ENCODE measurements at regions of chr6 and their contacts with region 1.

Region 1: DNA sequence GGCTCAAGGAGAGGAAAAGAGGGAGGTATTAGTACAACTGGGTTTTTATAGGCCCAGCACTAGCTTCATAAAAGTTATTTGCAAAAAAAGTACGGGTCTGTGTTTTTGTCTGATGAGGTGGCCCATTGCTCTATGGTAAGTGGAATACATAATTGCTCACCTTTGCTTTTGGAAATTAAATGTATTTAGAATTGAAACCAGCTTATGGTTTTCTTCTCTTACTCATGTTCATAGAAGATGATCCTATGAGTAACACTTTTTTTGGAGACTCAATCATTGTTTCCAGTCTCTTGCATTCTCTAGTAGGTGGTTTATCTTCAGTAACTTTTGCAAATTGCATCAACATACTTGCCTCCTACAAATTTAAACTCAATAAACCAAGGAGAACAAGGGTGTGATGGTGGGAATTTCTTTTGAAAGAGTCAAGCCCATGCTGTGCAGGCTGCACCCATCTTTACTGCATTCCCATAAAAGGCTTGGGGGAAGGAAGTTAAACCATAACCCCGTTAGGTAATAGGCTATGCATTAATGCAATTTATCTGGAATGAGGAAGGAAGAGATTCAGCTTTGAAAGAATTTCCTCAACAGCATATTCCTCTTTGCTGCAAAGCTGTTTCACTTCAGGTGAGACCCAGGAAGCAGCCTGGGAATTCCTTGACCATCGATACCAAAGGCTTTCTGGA is 48.5 kb upstream of the EDN1 start:
- DNase-seq: no peak
- H3K4me3 Mint-ChIP-seq: no peak overlapping the region
- H3K27ac Mint-ChIP-seq: peak overlapping the region; percentile 31
- H3K4me1 Mint-ChIP-seq: peaks cover 21% of the 10 kb centered on the region
- H3K27me3 Mint-ChIP-seq: peaks cover 6% of the 10 kb centered on the region

Region 2: DNA sequence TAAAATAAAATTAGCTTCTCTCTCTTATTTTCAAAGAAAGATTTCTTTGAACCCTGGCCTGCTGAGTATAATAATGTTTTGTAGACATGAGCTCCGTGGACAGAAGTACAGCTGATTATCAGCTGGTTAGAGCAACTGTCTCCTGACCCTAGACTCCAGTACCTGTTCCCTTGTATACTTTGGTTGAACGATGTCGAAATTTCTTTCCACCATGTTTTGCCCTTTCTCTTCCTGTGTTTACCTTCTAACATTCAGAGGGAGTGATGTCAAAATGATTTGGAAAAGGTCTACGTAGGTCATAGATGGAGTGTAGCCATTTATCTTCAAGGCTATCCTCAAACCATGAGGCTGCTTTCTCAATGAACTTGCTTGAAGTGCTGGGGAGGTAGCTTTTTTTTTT is 446.2 kb before region 1 on chr6:
- intact Hi-C with region 1: no loop called
- DNase-seq: no peak
- H3K4me3 Mint-ChIP-seq: no peak overlapping the region
- H3K27ac Mint-ChIP-seq: no peak overlapping the region
- H3K4me1 Mint-ChIP-seq: peaks cover 6% of the 10 kb centered on the region
- H3K27me3 Mint-ChIP-seq: peaks cover 3% of the 10 kb centered on the region

Region 3: GRCh38 chr6:11900662-11901598 is 340.7 kb before region 1 on chr6:
- intact Hi-C with region 1: no loop called
- DNase-seq: no peak
- H3K4me3 Mint-ChIP-seq: peak overlapping the region; percentile 4
- H3K27ac Mint-ChIP-seq: no peak overlapping the region
- H3K4me1 Mint-ChIP-seq: peaks cover 21% of the 10 kb centered on the region
- H3K27me3 Mint-ChIP-seq: peaks cover 8% of the 10 kb centered on the region

Region 4: DNA sequence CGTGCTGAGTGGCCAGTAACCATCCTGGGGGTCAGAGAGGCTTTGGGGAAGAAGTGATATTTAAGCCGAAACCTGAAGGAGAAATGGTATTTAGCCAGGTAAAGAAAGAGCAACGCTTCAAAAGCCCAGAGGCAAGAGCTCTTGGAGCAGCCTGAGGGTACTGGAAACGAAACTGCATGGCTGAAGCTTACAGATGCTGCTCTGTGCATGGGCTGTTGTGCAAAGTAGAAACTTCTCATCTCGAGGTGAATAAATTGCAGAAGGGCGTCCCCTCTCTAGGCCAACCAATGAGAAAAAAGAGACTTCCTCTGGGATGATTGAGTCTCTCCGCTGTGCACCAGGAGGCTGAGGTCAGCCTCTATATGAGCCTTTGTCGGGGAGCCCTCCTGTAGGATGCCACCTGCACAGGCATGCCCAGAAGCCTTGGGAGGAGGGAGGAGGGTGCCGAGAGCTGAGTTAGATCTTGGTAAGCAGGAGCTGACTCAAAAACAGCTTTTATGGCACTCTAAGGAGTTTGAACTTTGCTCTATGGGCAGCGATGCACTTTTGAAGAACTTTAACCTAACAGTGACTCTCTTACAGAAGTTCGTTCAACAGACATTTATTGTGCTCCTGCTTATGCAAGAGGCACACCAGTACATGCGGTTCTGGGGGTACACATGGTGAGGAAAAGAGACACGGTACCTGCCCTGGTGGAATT is 13.0 kb before region 1 on chr6:
- intact Hi-C with region 1: loop called (anchors 1 kb)
- DNase-seq: no peak
- H3K4me3 Mint-ChIP-seq: no peak overlapping the region
- H3K27ac Mint-ChIP-seq: no peak overlapping the region
- H3K4me1 Mint-ChIP-seq: peaks cover 34% of the 10 kb centered on the region
- H3K27me3 Mint-ChIP-seq: peaks cover 7% of the 10 kb centered on the region

Region 5: DNA sequence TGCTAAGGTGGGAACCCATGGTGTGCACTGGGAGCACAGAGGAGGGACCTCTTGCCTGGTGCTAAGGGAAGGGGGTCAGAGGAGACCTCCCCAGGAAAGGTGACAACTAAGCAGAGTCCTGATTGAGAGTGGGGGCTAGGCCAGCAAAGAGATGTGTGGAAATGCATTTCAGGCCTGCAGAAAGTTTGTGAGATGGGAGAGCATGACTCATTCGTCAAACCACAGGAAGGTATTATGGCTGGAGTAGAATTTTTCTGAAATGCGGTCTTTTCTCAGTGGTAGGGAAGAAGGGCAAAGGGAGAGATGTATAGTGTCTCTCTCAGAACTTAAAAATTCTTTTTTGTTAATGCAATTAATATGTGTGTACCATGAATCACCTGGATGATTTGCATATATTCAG is 24.9 kb after region 1 on chr6:
- intact Hi-C with region 1: loop called (anchors 2 kb)
- DNase-seq: no peak
- H3K4me3 Mint-ChIP-seq: no peak overlapping the region
- H3K27ac Mint-ChIP-seq: no peak overlapping the region
- H3K4me1 Mint-ChIP-seq: peaks cover 34% of the 10 kb centered on the region
- H3K27me3 Mint-ChIP-seq: peaks cover 10% of the 10 kb centered on the region

Region 6: DNA sequence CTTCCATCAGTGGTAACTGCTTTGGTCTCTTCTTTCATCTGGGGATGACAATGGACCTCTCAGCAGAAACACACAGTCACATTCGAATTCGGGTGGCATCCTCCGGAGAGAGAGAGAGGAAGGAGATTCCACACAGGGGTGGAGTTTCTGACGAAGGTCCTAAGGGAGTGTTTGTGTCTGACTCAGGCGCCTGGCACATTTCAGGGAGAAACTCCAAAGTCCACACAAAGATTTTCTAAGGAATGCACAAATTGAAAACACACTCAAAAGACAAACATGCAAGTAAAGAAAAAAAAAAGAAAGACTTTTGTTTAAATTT is 54.6 kb after region 1 on chr6:
- intact Hi-C with region 1: no loop called
- DNase-seq: no peak
- H3K4me3 Mint-ChIP-seq: no peak overlapping the region
- H3K27ac Mint-ChIP-seq: no peak overlapping the region
- H3K4me1 Mint-ChIP-seq: no peaks in the 10 kb centered on the region
- H3K27me3 Mint-ChIP-seq: peaks cover 26% of the 10 kb centered on the region